Dorsolateral prefrontal cortex (tissue), 120 donors: ENCODE measurements at regions of chrX and their contacts with region 1.

Region 1: DNA sequence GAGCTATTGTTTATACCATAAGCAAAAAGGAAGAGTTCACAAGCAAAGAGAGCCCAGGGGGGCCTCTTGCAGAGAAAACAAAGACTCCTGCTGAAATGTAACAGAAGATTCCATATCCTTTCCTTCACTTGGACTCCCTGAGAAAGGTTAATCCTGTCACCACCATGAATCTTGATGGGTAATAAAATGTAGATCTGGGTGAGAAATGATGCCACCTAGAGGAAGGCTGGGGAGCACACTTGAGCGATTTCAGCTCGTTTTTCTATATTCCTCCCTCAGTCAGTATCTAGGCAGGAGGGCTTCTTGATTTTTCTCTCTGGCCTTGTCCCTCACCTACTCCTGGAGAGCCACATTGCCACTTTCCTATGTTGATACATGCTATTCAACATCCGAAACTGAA is 10.2 kb upstream of the KCNE5 start:
- DNase-seq: no peak
- H3K4me3 ChIP-seq: no peak overlapping the region
- H3K27ac ChIP-seq: no peak overlapping the region
- H3K27me3 ChIP-seq: peaks cover 0 to 71% (median 21%) of the 10 kb centered on the region in 45 donors
- CTCF ChIP-seq: peak in 47 of 56 donors; percentile 14 to 57 (median 38)

Region 2: GRCh38 chrX:109485470-109486340 is 149.5 kb before region 1 on chrX:
- intact Hi-C with region 1: loop called (anchors 5 to 10 kb)
- DNase-seq: peak in 9 of 10 donors; percentile 30 to 86 (median 58)
- H3K4me3 ChIP-seq: no peak overlapping the region
- H3K27ac ChIP-seq: no peak overlapping the region
- H3K27me3 ChIP-seq: peaks cover 0 to 63% (median 15%) of the 10 kb centered on the region in 45 donors
- CTCF ChIP-seq: peak; percentile 38 to 100 (median 98)

Region 3: GRCh38 chrX:109536439-109537336 is 98.5 kb before region 1 on chrX and contains the start of gene NXT2:
- intact Hi-C with region 1: loop called in 1 of 2 experiments (anchors 10 kb)
- DNase-seq: peak; percentile 82 to 93 (median 91)
- H3K4me3 ChIP-seq: peak within 1 kb of the TSS; percentile 36 to 78 (median 60)
- H3K27ac ChIP-seq: peak within 1 kb of the TSS in 58 of 59 donors; percentile 57 to 95 (median 88)
- H3K27me3 ChIP-seq: peaks cover 0 to 44% (median 10%) of the 10 kb centered on the region in 45 donors
- CTCF ChIP-seq: peak in 8 of 56 donors; percentile 9 to 21 (median 14)
- total RNA-seq, gene NXT2: 1.8 to 14.4 (median 5.7) TPM

Region 4: GRCh38 chrX:109872021-109872732 is 237.0 kb after region 1 on chrX:
- intact Hi-C with region 1: no loop called
- DNase-seq: no peak
- H3K4me3 ChIP-seq: no peak overlapping the region
- H3K27ac ChIP-seq: no peak overlapping the region
- H3K27me3 ChIP-seq: peaks cover 0 to 36% (median 2%) of the 10 kb centered on the region in 45 donors
- CTCF ChIP-seq: no peak